ENCODE measurements at regions of chr10 and their contacts with region 1.

Region 1: DNA sequence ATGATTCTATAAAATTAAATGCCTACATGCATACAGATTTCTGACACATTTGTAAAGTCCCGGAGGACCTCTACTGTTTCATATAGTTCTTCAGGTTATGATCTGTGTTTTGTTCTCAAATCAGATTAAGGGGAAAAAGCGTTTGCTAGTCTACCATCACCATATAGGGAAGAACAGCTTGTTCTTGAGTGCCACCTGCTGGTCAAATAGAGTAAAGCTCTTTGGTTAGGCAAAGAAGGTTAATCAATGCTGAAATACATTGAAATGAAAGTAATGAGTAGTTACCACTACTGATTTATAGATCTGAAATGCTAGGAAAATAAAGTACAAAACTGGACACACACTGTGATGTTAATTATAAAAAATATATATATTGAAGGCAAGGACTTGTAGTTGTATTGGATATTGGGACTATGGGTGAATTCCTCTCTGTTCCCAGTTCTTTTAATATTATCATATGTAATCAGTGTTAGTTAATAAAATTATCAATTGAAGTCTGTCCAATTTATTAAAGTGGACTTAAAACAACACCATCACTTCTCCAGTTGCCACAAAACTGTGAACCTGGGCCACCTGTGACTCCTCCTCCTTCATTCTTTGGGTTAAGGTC is 72.6 kb upstream of the PDLIM1 start:
- DNase-seq: peak; percentile 71
- CTCF ChIP-seq: peak; percentile 84

Region 2: DNA sequence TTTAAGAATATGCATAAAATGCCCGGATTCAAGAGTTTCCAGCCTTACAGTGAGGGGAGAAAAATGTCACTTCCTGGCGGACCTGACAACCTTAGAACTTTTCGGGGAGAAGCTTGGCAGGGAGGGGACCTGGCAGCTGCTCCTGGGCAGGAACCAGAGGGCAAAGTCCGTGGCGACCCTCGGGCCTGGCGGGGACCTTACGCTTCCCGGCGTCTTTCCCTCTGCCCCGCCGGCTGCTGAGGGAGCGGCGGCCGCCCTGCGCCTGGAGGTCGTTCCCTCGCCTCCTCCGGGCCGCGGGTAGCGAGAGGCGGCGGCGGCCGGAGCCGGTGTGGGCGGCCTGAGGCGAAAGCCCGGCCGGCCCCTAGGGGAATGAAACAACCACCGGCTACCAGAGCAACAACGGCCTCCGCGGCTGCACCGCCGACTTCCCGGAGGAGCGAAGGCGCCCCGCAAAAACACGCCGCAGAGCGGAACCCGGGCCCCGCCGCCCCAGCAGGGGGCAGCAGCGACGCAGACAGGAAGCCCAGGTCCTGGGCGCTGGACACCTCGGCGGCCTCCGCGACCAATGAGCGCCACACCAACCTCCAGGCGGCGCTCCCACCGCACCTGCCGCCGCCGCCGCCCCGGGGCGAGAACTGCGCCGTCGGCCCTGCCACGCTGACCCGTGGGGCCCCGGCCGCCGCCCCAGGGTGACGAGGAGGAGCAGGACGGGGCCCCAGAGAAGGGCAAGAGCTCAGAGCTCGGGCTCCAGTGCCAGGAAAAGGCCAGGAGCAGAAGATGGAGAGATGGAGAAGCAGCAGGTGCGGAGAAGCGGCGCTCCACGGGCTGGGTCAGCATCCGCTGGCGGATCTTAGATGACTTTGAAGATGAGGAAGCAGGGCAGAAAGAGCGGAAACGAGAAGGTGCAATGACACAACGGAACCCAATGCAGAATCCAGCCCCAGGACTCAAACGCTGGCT is 179.9 kb before region 1 on chr10:
- CTCF ChIA-PET with region 1: interaction called, 61 read pairs
- POLR2A ChIA-PET with region 1: no interaction called
- DNase-seq: peak; percentile 93
- CTCF ChIP-seq: peak; percentile 96

Region 3: DNA sequence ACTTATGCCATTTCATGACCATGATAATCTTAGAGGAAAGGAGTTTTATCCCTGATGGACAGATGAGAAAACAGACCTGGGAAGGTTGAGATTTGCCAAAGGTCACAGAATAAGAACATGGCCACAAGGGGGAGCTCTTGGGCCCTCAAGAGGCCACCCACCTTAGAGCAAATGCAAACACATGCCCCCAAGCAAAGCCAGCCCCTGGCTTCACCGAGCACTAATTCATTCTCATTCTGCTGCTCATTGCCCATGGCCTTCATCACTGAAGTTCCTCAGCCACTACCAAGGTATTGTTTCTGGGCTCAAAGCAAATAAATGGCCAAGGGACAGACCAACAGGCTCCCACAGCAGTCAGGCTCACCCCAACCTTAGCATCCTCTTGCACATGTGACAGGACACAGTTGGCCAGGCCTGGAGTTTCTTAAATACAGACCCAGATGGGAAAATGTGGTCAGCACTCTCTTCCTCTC is 116.8 kb before region 1 on chr10:
- CTCF ChIA-PET with region 1: interaction called, 277 read pairs
- POLR2A ChIA-PET with region 1: no interaction called
- DNase-seq: peak; percentile 66
- CTCF ChIP-seq: peak; percentile 75

Region 4: DNA sequence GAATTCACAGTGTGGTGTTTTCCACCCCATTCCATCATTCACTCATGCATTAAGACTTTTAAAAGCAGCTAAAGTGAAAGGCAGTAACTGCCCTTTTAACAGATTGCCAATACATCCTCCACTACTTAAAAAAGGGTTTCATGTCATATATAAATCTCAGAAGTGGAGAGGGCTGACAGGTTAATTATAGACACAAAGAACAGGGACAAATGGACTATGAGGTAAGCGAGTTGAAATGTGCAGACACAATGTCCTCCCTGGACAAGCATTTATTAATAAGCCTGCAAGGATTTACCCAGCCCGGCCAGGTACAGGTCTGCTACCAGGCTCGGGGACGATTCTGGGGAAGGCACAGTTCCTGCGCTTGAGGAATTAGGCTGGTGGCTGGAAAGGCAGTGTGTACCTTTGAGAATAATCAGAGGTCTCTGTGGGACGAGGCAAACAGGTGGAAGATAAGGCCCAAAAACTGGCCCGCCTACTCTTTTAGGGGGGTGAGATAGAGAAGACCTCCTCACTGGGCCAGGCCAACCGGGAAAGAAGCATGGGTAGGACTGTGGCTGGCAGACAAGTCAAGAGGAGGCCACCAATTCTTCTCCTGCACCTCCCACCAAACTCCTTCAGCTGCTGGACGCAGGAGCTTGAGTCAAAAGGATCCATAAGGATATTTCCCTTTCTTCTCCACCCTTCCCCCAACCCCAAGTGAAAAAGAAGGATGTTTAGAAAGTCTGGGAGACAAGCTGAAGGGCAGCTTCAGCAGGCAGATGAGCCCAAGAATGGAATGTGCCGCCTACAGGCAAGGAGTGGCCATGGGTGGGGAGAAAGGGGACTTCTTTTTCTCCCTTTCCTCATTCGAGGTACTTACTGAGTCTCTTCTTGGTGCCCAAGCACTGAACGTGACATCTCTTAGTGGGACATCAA is 74.1 kb before region 1 on chr10:
- CTCF ChIA-PET with region 1: interaction called, 47 read pairs
- POLR2A ChIA-PET with region 1: no interaction called
- DNase-seq: peak; percentile 34
- CTCF ChIP-seq: peak; percentile 35

Region 5: DNA sequence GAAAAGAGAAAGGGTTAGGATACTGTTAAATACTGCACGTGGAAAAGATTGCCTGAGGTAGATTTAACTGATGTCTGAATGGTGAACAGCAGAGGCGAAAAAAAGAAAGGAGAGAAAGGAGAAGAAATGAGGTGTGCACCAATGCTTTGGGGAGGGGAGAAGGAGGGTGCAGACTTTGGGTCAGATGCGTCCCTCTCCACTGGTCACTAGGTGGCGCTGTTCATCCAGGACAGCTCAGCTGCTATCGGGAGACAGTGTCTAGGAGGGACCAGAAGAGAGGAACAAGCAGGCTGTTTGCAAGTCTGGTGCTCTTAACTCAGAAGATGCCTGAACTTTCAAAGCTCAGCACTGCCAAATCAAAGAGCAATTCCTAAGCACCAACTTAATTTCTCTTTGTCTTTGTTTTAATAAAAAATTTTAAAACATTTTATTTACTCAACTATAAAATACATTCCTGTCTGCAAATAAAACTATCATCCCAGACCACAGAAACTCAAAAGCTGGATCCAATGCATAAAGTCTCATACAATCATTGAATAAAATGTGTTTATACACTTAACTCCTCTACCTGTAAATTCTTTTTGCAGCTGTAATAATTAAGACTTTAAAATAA is 11.3 kb after region 1 on chr10:
- CTCF ChIA-PET with region 1: interaction called, 183 read pairs
- POLR2A ChIA-PET with region 1: no interaction called
- DNase-seq: peak; percentile 71
- CTCF ChIP-seq: peak; percentile 96

Measured in GM10248 (cell line).